ENCODE measurements at regions of chr10 and their contacts with region 1.

Region 1: DNA sequence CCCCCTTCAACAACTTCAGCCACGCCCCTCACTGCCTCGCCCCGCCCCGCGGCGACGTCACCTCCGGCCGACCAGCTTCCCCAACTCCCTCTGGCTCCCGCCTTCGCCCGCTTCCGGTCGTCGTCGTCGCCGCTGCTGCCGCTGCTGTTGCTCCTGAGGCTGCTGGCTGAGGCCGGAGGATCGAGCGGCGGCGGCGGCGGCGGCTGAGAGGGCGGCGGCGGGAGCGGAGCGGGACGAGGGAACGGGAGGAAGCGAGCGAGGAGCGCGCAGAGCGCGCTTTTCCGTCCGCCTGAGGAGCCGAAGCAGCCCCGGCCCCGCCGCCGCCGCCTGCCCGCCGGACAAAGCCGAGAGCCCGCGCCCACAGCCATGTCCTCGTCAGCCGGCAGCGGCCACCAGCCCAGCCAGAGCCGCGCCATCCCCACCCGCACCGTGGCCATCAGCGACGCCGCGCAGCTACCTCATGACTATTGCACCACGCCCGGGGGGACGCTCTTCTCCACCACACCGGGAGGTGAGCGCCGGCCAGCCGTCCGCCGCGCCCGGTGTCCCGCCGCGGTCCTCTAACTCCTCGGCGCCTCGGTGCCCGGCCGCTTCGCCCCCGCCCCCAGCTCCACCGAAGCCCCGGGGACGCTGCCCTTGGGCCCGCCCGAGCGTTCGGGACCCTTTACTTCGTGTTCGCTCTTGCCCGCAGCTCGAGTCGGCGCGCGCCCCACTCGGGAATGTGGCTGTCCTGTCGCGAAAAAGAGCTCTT is at the start of gene EIF4EBP2:
- DNase-seq: peak; percentile 99 to 100
- H3K4me3 ChIP-seq: peak within 1 kb of the TSS; percentile 99
- H3K4me3 Mint-ChIP-seq: peak within 1 kb of the TSS; percentile 95
- H3K27ac Mint-ChIP-seq: peak within 1 kb of the TSS; percentile 91
- H3K4me1 ChIP-seq: peaks cover 15% of the 10 kb centered on the region
- H3K4me1 Mint-ChIP-seq: peaks cover 47% of the 10 kb centered on the region
- H3K27me3 ChIP-seq: no peaks in the 10 kb centered on the region
- H3K27me3 Mint-ChIP-seq: no peaks in the 10 kb centered on the region
- CTCF ChIP-seq: no peak
- total RNA-seq, gene EIF4EBP2: 166 and 168 TPM in 2 replicates

Region 2: DNA sequence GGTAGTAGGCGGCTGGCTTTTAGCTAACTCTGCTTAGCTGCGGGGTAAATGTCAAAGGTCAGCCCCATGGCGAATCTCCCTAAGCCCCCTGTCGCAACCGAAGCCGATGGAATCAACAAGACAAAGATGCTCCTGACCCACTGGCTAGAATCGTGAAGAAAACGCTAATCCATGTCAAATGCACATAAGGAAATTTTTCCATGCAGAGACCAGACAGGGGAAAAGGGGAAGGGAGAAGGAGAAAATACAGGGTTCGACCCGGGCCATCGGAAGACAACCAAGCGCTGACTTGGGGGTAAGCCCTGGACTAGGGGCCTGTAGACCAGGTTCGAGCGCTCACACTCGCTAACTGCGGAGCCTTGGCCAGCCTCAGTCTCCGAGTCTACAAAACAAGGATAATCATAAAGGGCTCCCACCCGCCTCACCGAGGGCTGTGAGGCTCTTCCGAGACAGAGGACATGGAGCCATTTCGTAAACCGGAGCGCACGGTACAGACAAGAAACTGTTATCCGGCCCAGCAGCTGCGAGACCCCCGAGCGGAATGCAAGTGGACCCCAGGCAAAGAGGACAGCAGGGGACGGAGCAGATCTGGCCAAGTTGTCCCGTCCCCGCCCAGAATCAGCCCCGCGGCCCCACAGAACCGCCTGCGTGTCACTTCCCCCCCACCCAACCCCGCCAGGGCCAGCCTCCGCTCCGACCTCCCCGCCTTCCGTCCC is 234.4 kb before region 1 on chr10:
- CTCF ChIA-PET with region 1: no interaction called
- POLR2A ChIA-PET with region 1: interaction called, 29 read pairs
- intact Hi-C with region 1: no loop called
- DNase-seq: peak in 1 of 2 experiments; percentile 33
- H3K4me3 ChIP-seq: peak overlapping the region; percentile 66
- H3K4me3 Mint-ChIP-seq: peak overlapping the region; percentile 96
- H3K27ac Mint-ChIP-seq: peak overlapping the region; percentile 98
- H3K4me1 ChIP-seq: peaks cover 5% of the 10 kb centered on the region
- H3K4me1 Mint-ChIP-seq: peaks cover 24% of the 10 kb centered on the region
- H3K27me3 ChIP-seq: no peaks in the 10 kb centered on the region
- H3K27me3 Mint-ChIP-seq: no peaks in the 10 kb centered on the region
- CTCF ChIP-seq: no peak

Region 3: GRCh38 chr10:70233109-70233938 is 170.9 kb before region 1 on chr10 and contains the start of gene PPA1:
- CTCF ChIA-PET with region 1: no interaction called
- POLR2A ChIA-PET with region 1: interaction called, 12 read pairs
- intact Hi-C with region 1: no loop called
- DNase-seq: peak; percentile 99 to 100
- H3K4me3 ChIP-seq: peak within 1 kb of the TSS; percentile 85
- H3K4me3 Mint-ChIP-seq: peak within 1 kb of the TSS; percentile 76
- H3K27ac Mint-ChIP-seq: peak within 1 kb of the TSS; percentile 99
- H3K4me1 ChIP-seq: peaks cover 19% of the 10 kb centered on the region
- H3K4me1 Mint-ChIP-seq: peaks cover 19% of the 10 kb centered on the region
- H3K27me3 ChIP-seq: no peaks in the 10 kb centered on the region
- H3K27me3 Mint-ChIP-seq: no peaks in the 10 kb centered on the region
- CTCF ChIP-seq: peak; percentile 56 to 81
- total RNA-seq, gene PPA1: 350 and 353 TPM in 2 replicates

Region 4: DNA sequence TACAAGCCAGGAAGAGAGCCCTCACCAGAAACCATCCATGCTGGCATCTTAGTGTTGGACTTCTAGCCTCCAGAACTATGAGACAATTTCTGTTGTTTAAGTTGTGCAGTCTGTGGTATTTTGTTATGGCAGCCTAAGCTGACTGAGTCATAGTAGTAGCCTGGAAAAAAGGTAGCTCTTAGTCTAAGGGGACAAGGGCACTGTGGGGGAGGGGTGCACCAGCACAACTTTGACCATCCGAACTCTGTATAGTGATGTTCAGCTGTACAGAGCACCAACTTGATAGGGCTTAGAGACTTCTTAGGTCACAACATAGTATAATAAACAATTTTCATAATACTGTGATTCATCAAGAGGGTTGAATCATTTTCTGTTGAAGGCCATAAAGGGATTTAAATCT is 14.0 kb after region 1 on chr10:
- CTCF ChIA-PET with region 1: interaction called, 6 read pairs
- POLR2A ChIA-PET with region 1: interaction called, 14 read pairs
- intact Hi-C with region 1: no loop called
- DNase-seq: no peak
- H3K4me3 ChIP-seq: no peak overlapping the region
- H3K4me3 Mint-ChIP-seq: no peak overlapping the region
- H3K27ac Mint-ChIP-seq: no peak overlapping the region
- H3K4me1 ChIP-seq: peaks cover 33% of the 10 kb centered on the region
- H3K4me1 Mint-ChIP-seq: peaks cover 53% of the 10 kb centered on the region
- H3K27me3 ChIP-seq: no peaks in the 10 kb centered on the region
- H3K27me3 Mint-ChIP-seq: no peaks in the 10 kb centered on the region
- CTCF ChIP-seq: no peak

Region 5: DNA sequence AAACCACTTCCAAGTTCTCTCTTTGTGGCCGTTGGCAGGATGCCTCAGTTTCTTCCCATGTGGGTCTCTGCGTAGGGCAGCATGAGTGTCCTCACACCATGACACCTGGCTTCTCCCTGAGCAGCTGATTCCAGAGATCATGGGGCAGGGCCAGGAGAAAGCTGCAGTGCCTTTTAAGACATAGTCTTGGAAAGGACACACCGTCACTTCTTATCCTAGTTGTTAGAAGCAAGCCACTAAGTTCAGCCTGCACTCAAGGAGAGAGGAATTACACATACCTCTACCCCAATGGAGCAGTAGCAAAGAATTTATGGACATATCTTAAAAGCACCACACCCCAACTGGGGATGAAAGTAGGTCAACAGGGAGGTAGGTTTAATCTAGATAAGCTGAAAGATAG is 20.9 kb after region 1 on chr10:
- CTCF ChIA-PET with region 1: interaction called, 8 read pairs
- POLR2A ChIA-PET with region 1: interaction called, 39 read pairs
- intact Hi-C with region 1: no loop called
- DNase-seq: peak; percentile 73 to 78
- H3K4me3 ChIP-seq: no peak overlapping the region
- H3K4me3 Mint-ChIP-seq: peak overlapping the region; percentile 51
- H3K27ac Mint-ChIP-seq: peak overlapping the region; percentile 88
- H3K4me1 ChIP-seq: peaks cover 65% of the 10 kb centered on the region
- H3K4me1 Mint-ChIP-seq: peaks cover 49% of the 10 kb centered on the region
- H3K27me3 ChIP-seq: no peaks in the 10 kb centered on the region
- H3K27me3 Mint-ChIP-seq: no peaks in the 10 kb centered on the region
- CTCF ChIP-seq: no peak

Region 6: GRCh38 chr10:70441161-70441894 is 37.1 kb after region 1 on chr10 and contains the start of gene NODAL:
- CTCF ChIA-PET with region 1: interaction called, 21 read pairs
- POLR2A ChIA-PET with region 1: interaction called, 9 read pairs
- intact Hi-C with region 1: loop called (anchors 1 kb)
- DNase-seq: no peak
- H3K4me3 ChIP-seq: no peak within 1 kb of the TSS
- H3K4me3 Mint-ChIP-seq: peak within 1 kb of the TSS; percentile 12
- H3K27ac Mint-ChIP-seq: peak within 1 kb of the TSS; percentile 74
- H3K4me1 ChIP-seq: peaks cover 48% of the 10 kb centered on the region
- H3K4me1 Mint-ChIP-seq: peaks cover 34% of the 10 kb centered on the region
- H3K27me3 ChIP-seq: no peaks in the 10 kb centered on the region
- H3K27me3 Mint-ChIP-seq: no peaks in the 10 kb centered on the region
- CTCF ChIP-seq: no peak
- total RNA-seq, gene NODAL: 0.59 and 1.3 TPM in 2 replicates

Measured in Caco-2 (cell line).